CD8-positive, alpha-beta T cell (primary cell): ENCODE measurements at regions of chr22 and their contacts with region 1.

Region 1: GRCh38 chr22:30485362-30485988 is 13.7 kb upstream of the SEC14L3 start:
- DNase-seq: peak; percentile 60 to 85 (median 75)
- ATAC-seq: peak; percentile 98
- H3K4me3 ChIP-seq: no peak overlapping the region
- H3K4me3 Mint-ChIP-seq: no peak overlapping the region
- H3K27ac ChIP-seq: no peak overlapping the region
- H3K27ac Mint-ChIP-seq: no peak overlapping the region
- H3K4me1 ChIP-seq: no peaks in the 10 kb centered on the region
- H3K4me1 Mint-ChIP-seq: no peaks in the 10 kb centered on the region
- H3K27me3 ChIP-seq: no peaks in the 10 kb centered on the region
- H3K27me3 Mint-ChIP-seq: peaks cover 2% of the 10 kb centered on the region
- CTCF ChIP-seq: peak; percentile 95

Region 2: GRCh38 chr22:30114361-30114760 is 371.1 kb before region 1 on chr22:
- CTCF ChIA-PET with region 1: no interaction called
- POLR2A ChIA-PET with region 1: no interaction called
- intact Hi-C with region 1: loop called (anchors 5 to 10 kb)
- DNase-seq: no peak
- ATAC-seq: no peak
- H3K4me3 ChIP-seq: no peak overlapping the region
- H3K4me3 Mint-ChIP-seq: no peak overlapping the region
- H3K27ac ChIP-seq: no peak overlapping the region
- H3K27ac Mint-ChIP-seq: no peak overlapping the region
- H3K4me1 ChIP-seq: no peaks in the 10 kb centered on the region
- H3K4me1 Mint-ChIP-seq: no peaks in the 10 kb centered on the region
- H3K27me3 ChIP-seq: no peaks in the 10 kb centered on the region
- H3K27me3 Mint-ChIP-seq: no peaks in the 10 kb centered on the region
- CTCF ChIP-seq: no peak

Region 3: DNA sequence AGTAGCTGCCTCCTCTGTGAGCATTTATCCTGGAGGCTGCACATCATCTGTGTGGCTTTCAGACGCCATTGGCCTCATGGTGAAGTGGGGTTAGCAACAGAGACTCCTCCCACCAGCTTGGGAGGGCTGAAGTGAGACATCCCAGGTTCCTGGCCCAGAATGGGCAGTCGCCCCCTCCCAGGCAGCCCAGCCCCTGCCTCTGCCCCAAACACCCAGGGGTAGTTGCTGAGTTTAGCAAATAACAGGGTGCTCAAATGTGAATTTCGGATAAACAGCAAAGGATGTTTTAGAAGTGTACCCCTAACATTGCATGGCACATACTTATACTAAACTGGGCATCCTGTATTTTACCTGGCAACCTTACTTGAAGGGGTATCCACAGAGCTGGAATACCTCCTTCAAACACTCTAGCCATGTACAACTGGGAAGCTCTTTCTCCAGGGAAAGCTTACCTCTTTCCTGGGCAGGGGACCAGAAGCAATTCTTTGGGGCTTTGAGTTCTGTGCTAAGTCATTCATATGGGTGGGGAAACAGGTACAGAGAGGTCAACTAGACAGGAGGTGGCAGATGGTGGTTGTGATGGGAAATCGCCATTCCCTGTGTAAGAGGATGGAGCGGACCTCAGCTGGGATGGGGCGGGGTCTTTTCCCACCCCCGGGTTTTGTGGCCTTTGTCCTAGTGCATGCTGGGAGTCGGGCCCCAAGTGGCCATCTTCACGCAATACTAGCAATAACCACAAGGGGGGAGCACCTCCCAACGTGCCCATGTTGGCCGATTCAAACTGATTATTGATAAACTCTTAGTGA is 40.6 kb before region 1 on chr22:
- CTCF ChIA-PET with region 1: interaction called, 9 read pairs
- POLR2A ChIA-PET with region 1: no interaction called
- intact Hi-C with region 1: loop called in 1 of 2 experiments (anchors 1 kb)
- DNase-seq: peak in 5 of 9 experiments; percentile 37 to 74 (median 51)
- ATAC-seq: peak; percentile 51
- H3K4me3 ChIP-seq: no peak overlapping the region
- H3K4me3 Mint-ChIP-seq: no peak overlapping the region
- H3K27ac ChIP-seq: no peak overlapping the region
- H3K27ac Mint-ChIP-seq: no peak overlapping the region
- H3K4me1 ChIP-seq: peaks cover 10% of the 10 kb centered on the region
- H3K4me1 Mint-ChIP-seq: peaks cover 14% of the 10 kb centered on the region
- H3K27me3 ChIP-seq: peaks cover 3 to 16% of the 10 kb centered on the region in 2 experiments
- H3K27me3 Mint-ChIP-seq: peaks cover 55% of the 10 kb centered on the region
- CTCF ChIP-seq: peak; percentile 74

Region 4: GRCh38 chr22:31036671-31037550 is 551.4 kb after region 1 on chr22:
- CTCF ChIA-PET with region 1: no interaction called
- POLR2A ChIA-PET with region 1: no interaction called
- intact Hi-C with region 1: no loop called
- DNase-seq: peak in 3 of 9 experiments; percentile 14 to 23 (median 20)
- ATAC-seq: no peak
- H3K4me3 ChIP-seq: no peak overlapping the region
- H3K4me3 Mint-ChIP-seq: no peak overlapping the region
- H3K27ac ChIP-seq: no peak overlapping the region
- H3K27ac Mint-ChIP-seq: no peak overlapping the region
- H3K4me1 ChIP-seq: no peaks in the 10 kb centered on the region
- H3K4me1 Mint-ChIP-seq: no peaks in the 10 kb centered on the region
- H3K27me3 ChIP-seq: no peaks in the 10 kb centered on the region
- H3K27me3 Mint-ChIP-seq: peaks cover 7% of the 10 kb centered on the region
- CTCF ChIP-seq: no peak